B cell (primary cell): ENCODE measurements at regions of chr6 and their contacts with region 1.

Region 1: GRCh38 chr6:137707590-137708360 is 159.3 kb upstream of the TNFAIP3 start:
- DNase-seq: peak; percentile 91
- ATAC-seq: peak; percentile 80
- H3K4me3 ChIP-seq: peak overlapping the region in 3 of 5 experiments; percentile 13 to 20 (median 16)
- H3K4me3 Mint-ChIP-seq: peak overlapping the region; percentile 75
- H3K27ac ChIP-seq: peak overlapping the region; percentile 16 to 27
- H3K27ac Mint-ChIP-seq: peak overlapping the region; percentile 88
- H3K4me1 ChIP-seq: peaks cover 17 to 19% of the 10 kb centered on the region in 2 donors
- H3K4me1 Mint-ChIP-seq: peaks cover 49% of the 10 kb centered on the region
- H3K27me3 ChIP-seq: no peaks in the 10 kb centered on the region
- H3K27me3 Mint-ChIP-seq: peaks cover 5% of the 10 kb centered on the region
- CTCF ChIP-seq: peak; percentile 88

Region 2: DNA sequence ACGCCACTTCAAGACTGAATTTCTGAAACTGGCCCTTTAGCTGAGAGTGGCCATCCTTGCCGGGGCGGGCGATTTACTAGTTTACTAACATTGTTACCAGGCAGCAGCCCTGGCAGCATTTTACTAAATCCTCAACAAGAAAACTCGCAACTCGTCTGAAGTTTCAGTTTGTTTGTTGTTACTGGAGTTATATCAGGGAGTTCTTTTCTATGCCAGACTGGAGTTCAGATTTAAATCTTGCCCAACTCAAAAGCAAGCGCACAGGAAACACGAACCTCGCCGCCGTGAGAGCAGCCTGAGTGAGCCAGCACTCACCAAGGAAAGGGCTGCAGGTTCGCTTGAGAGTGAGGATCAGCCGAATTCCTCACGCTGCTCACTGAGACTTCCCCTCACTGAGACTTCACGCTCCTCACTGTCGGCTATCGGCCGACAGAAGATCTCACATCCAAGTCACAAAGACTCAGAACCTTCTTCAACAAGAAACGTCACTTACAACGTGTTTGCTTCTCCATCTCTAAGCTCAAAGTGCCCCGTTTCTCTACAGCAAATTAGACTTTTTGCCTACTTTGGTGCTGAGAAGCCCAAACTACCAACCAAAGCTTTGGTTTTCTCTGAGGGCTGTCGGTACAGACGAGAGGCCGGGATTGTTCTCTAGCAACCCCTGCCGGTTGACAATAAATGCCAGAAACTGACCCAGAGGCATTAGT is 292.5 kb before region 1 on chr6:
- CTCF ChIA-PET with region 1: no interaction called
- POLR2A ChIA-PET with region 1: no interaction called
- intact Hi-C with region 1: no loop called
- DNase-seq: peak; percentile 81
- ATAC-seq: peak; percentile 97
- H3K4me3 ChIP-seq: peak overlapping the region; percentile 39 to 77 (median 63)
- H3K4me3 Mint-ChIP-seq: peak overlapping the region; percentile 89
- H3K27ac ChIP-seq: peak overlapping the region; percentile 14 to 65
- H3K27ac Mint-ChIP-seq: peak overlapping the region; percentile 43
- H3K4me1 ChIP-seq: peaks cover 8 to 9% of the 10 kb centered on the region in 2 donors
- H3K4me1 Mint-ChIP-seq: peaks cover 10% of the 10 kb centered on the region
- H3K27me3 ChIP-seq: peaks cover 0 to 9% (median 3%) of the 10 kb centered on the region in 4 experiments
- H3K27me3 Mint-ChIP-seq: peaks cover 7% of the 10 kb centered on the region
- CTCF ChIP-seq: peak; percentile 79

Region 3: DNA sequence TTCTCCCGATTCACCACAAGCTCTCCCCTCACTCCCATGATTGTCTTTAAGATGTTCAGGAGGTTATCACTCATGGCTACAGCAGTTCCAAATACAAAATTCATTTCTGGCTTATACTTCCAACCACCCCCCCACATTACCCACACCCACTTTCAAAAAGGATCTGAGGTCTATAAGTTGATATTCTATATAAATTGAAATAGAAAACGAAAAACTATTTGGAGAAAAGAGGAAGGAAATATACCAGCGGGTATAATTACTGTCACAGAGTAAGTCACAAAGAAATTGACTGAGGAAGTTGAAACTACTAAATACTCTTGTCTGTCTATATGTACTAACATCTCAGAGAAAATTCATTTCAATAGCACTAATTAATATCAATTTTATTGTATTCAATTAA is 46.6 kb after region 1 on chr6:
- CTCF ChIA-PET with region 1: interaction called, 4 read pairs
- POLR2A ChIA-PET with region 1: no interaction called
- intact Hi-C with region 1: loop called (anchors 5 kb)
- DNase-seq: peak; percentile 58
- ATAC-seq: peak; percentile 70
- H3K4me3 ChIP-seq: peak overlapping the region in 1 of 5 experiments; percentile 47
- H3K4me3 Mint-ChIP-seq: peak overlapping the region; percentile 55
- H3K27ac ChIP-seq: peak overlapping the region; percentile 72 to 87
- H3K27ac Mint-ChIP-seq: peak overlapping the region; percentile 74
- H3K4me1 ChIP-seq: peaks cover 33 to 34% of the 10 kb centered on the region in 2 donors
- H3K4me1 Mint-ChIP-seq: peaks cover 37% of the 10 kb centered on the region
- H3K27me3 ChIP-seq: no peaks in the 10 kb centered on the region
- H3K27me3 Mint-ChIP-seq: no peaks in the 10 kb centered on the region
- CTCF ChIP-seq: no peak

Region 4: DNA sequence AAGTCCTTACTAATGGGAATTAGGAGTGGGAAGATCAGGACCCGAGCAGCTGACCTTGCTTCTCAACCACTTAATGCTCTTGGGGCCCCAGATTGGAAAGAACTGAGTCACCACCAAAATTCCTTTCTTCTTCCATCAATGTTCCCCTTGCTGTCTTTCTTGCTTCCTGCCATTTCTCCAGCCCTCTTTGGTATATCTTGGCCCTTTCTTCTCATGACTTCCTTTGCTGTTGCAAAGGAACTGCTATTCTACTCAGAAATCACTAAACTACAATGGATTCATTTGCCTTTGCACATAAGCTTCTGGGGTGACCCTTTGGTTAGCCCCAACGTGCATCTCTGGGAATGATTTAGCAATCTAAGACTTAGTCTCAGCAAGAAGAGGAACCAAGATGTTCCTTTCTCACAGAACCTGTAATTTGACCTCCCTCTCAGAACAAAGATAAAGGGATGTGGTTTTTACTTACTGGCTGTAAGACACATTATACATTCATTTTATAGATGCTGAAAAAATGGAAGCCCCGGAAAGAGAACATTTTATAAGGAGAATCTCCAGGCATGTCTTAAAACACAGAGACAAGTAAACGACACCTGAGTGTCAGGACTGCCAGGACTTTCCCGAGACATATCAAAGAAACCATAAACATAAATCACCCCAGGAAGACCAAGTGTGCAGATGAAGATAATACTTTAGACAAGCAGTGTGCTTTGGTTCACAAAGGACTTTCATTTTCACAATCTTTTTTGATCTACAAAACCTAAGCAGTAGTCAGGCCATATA is 60.3 kb after region 1 on chr6:
- CTCF ChIA-PET with region 1: no interaction called
- POLR2A ChIA-PET with region 1: no interaction called
- intact Hi-C with region 1: no loop called
- DNase-seq: peak; percentile 39
- ATAC-seq: peak; percentile 51
- H3K4me3 ChIP-seq: no peak overlapping the region
- H3K4me3 Mint-ChIP-seq: no peak overlapping the region
- H3K27ac ChIP-seq: peak overlapping the region in 1 of 2 donors; percentile 61
- H3K27ac Mint-ChIP-seq: no peak overlapping the region
- H3K4me1 ChIP-seq: peaks cover 22 to 29% of the 10 kb centered on the region in 2 donors
- H3K4me1 Mint-ChIP-seq: peaks cover 21% of the 10 kb centered on the region
- H3K27me3 ChIP-seq: no peaks in the 10 kb centered on the region
- H3K27me3 Mint-ChIP-seq: no peaks in the 10 kb centered on the region
- CTCF ChIP-seq: no peak

Region 5: DNA sequence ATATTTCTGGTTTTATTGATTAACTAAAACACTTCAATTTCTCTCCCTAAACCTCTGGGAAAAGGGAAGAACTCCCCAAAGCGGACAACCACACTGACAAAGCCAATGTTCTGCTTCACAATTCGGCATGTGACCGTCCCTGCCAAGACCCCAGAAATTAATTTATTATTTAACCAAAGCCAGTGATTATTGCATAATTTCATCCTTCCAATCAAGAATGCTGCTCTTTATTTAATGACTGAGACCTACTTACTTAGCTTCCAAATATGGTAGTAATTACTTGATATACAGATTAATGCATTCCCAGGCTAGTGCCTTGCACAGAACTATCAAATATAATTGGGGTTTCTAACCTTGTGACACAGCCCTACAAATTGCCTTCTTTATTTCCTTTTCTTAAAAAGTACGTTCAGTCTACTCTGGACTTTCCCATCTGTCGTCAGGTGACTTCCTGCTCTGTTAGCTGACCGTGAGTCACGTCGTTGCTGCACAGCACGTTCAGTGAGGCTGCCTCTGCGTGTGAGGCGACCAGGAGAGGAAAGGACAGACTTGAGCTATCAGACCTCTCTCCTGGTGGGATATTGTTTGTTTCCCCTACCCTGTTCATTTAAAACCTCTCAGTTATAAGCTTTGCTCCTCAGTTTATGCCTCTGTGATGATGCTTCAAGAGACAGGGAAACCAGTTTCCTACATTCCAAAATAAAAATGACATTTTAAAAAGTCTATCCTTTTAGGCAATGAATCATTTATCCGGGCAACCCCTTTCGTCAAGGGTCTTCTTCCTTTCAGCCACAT is 103.5 kb after region 1 on chr6:
- CTCF ChIA-PET with region 1: interaction called, 8 read pairs
- POLR2A ChIA-PET with region 1: no interaction called
- intact Hi-C with region 1: loop called (anchors 5 kb)
- DNase-seq: peak; percentile 92
- ATAC-seq: peak; percentile 98
- H3K4me3 ChIP-seq: peak overlapping the region in 4 of 5 experiments; percentile 14 to 54 (median 26)
- H3K4me3 Mint-ChIP-seq: peak overlapping the region; percentile 73
- H3K27ac ChIP-seq: peak overlapping the region; percentile 85 to 91
- H3K27ac Mint-ChIP-seq: peak overlapping the region; percentile 87
- H3K4me1 ChIP-seq: peaks cover 20 to 26% of the 10 kb centered on the region in 2 donors
- H3K4me1 Mint-ChIP-seq: peaks cover 27% of the 10 kb centered on the region
- H3K27me3 ChIP-seq: no peaks in the 10 kb centered on the region
- H3K27me3 Mint-ChIP-seq: no peaks in the 10 kb centered on the region
- CTCF ChIP-seq: no peak

Region 6: DNA sequence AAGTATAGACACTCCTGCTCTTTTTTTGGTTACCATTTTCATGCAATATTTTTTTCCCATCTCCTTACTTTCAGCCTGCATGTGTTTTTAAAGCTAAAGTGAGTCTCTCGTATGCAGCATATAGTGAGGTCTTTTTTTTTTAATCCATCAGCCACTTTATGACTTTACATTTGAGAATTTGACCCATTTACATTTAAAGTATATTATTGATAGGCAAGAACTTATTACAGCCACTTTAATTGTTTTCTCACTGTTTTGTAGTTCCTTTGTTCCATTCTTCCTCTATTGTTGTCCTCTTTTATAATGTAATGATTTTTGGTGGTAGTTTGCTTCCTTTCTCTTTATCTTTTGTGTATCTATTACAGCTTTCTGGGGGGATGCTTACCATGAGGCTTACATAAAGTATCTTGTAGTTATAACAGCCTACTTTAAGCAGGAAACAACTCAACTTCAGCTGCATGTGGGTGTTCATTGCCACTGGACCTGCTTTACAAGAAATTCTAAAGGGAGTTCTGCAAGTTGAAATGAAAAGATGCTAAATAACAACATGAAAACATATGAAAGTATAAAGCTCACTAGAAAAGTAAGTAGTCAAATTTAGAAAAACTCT is 231.1 kb after region 1 on chr6:
- CTCF ChIA-PET with region 1: interaction called, 128 read pairs
- POLR2A ChIA-PET with region 1: no interaction called
- intact Hi-C with region 1: loop called (anchors 1 kb)
- DNase-seq: no peak
- ATAC-seq: no peak
- H3K4me3 ChIP-seq: no peak overlapping the region
- H3K4me3 Mint-ChIP-seq: no peak overlapping the region
- H3K27ac ChIP-seq: no peak overlapping the region
- H3K27ac Mint-ChIP-seq: no peak overlapping the region
- H3K4me1 ChIP-seq: peaks cover 8 to 10% of the 10 kb centered on the region in 2 donors
- H3K4me1 Mint-ChIP-seq: peaks cover 9% of the 10 kb centered on the region
- H3K27me3 ChIP-seq: no peaks in the 10 kb centered on the region
- H3K27me3 Mint-ChIP-seq: no peaks in the 10 kb centered on the region
- CTCF ChIP-seq: no peak

Region 7: GRCh38 chr6:138001750-138002349 is 294.1 kb after region 1 on chr6:
- CTCF ChIA-PET with region 1: interaction called, 28 read pairs
- POLR2A ChIA-PET with region 1: no interaction called
- intact Hi-C with region 1: loop called (anchors 1 kb)
- DNase-seq: peak; percentile 65
- ATAC-seq: peak; percentile 63
- H3K4me3 ChIP-seq: no peak overlapping the region
- H3K4me3 Mint-ChIP-seq: no peak overlapping the region
- H3K27ac ChIP-seq: no peak overlapping the region
- H3K27ac Mint-ChIP-seq: no peak overlapping the region
- H3K4me1 ChIP-seq: no peaks in the 10 kb centered on the region
- H3K4me1 Mint-ChIP-seq: peaks cover 3% of the 10 kb centered on the region
- H3K27me3 ChIP-seq: no peaks in the 10 kb centered on the region
- H3K27me3 Mint-ChIP-seq: peaks cover 11% of the 10 kb centered on the region
- CTCF ChIP-seq: peak; percentile 96

Region 8: DNA sequence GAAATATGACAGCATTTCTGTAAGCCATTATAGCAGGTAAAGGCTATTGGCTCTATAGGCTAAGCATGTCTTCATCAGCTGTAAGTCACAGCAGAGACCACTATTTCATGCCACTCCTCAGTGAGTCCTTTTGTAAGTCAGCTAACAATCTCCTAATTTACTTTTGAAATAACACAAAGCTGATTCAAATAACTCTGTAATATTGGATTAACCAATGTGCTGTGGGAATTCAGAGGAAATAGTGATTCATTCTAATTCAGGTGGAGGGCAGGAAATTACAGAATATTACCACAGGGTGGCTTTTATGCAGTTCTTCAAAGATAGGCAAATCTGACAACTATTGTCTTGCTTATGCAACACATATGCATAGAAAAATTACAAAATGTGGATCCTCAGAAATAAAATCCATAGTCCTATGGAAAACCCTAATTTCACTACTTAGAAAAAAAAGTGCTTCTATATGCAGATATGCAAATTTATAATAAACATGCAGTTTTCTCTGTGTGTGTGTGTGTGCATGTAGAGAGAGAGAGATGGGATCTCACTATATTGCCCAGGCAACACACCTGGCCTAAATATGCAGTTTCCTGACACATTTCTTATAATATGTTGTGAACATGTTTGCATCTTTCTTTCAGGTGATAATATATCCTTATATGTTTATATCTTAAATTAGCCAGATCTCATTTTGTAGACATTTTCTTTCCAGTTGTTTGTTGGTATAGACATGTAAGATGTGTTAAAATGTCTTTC is 665.1 kb after region 1 on chr6:
- CTCF ChIA-PET with region 1: no interaction called
- POLR2A ChIA-PET with region 1: no interaction called
- intact Hi-C with region 1: no loop called
- DNase-seq: peak; percentile 24
- ATAC-seq: no peak
- H3K4me3 ChIP-seq: no peak overlapping the region
- H3K4me3 Mint-ChIP-seq: no peak overlapping the region
- H3K27ac ChIP-seq: no peak overlapping the region
- H3K27ac Mint-ChIP-seq: no peak overlapping the region
- H3K4me1 ChIP-seq: no peaks in the 10 kb centered on the region
- H3K4me1 Mint-ChIP-seq: no peaks in the 10 kb centered on the region
- H3K27me3 ChIP-seq: no peaks in the 10 kb centered on the region
- H3K27me3 Mint-ChIP-seq: peaks cover 12% of the 10 kb centered on the region
- CTCF ChIP-seq: no peak